Activated B cell treated with CpG ODN at 0.5 μM for 24 hours (primary cell): ENCODE measurements at regions of chr13 and their contacts with region 1.

Region 1: GRCh38 chr13:41352935-41353840 is 42.1 kb downstream of the NAA16 start:
- DNase-seq: no peak
- ATAC-seq: no peak
- H3K4me3 Mint-ChIP-seq: peak overlapping the region; percentile 15
- H3K27ac Mint-ChIP-seq: no peak overlapping the region
- H3K4me1 Mint-ChIP-seq: peaks cover 5% of the 10 kb centered on the region
- H3K27me3 Mint-ChIP-seq: no peaks in the 10 kb centered on the region
- CTCF ChIP-seq: no peak

Region 2: GRCh38 chr13:41075034-41075433 is 278.2 kb before region 1 on chr13:
- CTCF ChIA-PET with region 1: interaction called, 4 read pairs
- POLR2A ChIA-PET with region 1: no interaction called
- intact Hi-C with region 1: loop called (anchors 1 kb)
- DNase-seq: no peak
- ATAC-seq: peak; percentile 58
- H3K4me3 Mint-ChIP-seq: no peak overlapping the region
- H3K27ac Mint-ChIP-seq: no peak overlapping the region
- H3K4me1 Mint-ChIP-seq: no peaks in the 10 kb centered on the region
- H3K27me3 Mint-ChIP-seq: no peaks in the 10 kb centered on the region
- CTCF ChIP-seq: no peak

Region 3: GRCh38 chr13:41370736-41371135 is 17.5 kb after region 1 on chr13:
- CTCF ChIA-PET with region 1: no interaction called
- POLR2A ChIA-PET with region 1: no interaction called
- intact Hi-C with region 1: no loop called
- DNase-seq: no peak
- ATAC-seq: no peak
- H3K4me3 Mint-ChIP-seq: no peak overlapping the region
- H3K27ac Mint-ChIP-seq: no peak overlapping the region
- H3K4me1 Mint-ChIP-seq: no peaks in the 10 kb centered on the region
- H3K27me3 Mint-ChIP-seq: no peaks in the 10 kb centered on the region
- CTCF ChIP-seq: no peak

Region 4: GRCh38 chr13:41652727-41653361 is 299.7 kb after region 1 on chr13:
- CTCF ChIA-PET with region 1: interaction called, 9 read pairs
- POLR2A ChIA-PET with region 1: no interaction called
- intact Hi-C with region 1: loop called (anchors 1 kb)
- DNase-seq: no peak
- ATAC-seq: no peak
- H3K4me3 Mint-ChIP-seq: no peak overlapping the region
- H3K27ac Mint-ChIP-seq: no peak overlapping the region
- H3K4me1 Mint-ChIP-seq: peaks cover 9% of the 10 kb centered on the region
- H3K27me3 Mint-ChIP-seq: peaks cover 41% of the 10 kb centered on the region
- CTCF ChIP-seq: no peak

Region 5: DNA sequence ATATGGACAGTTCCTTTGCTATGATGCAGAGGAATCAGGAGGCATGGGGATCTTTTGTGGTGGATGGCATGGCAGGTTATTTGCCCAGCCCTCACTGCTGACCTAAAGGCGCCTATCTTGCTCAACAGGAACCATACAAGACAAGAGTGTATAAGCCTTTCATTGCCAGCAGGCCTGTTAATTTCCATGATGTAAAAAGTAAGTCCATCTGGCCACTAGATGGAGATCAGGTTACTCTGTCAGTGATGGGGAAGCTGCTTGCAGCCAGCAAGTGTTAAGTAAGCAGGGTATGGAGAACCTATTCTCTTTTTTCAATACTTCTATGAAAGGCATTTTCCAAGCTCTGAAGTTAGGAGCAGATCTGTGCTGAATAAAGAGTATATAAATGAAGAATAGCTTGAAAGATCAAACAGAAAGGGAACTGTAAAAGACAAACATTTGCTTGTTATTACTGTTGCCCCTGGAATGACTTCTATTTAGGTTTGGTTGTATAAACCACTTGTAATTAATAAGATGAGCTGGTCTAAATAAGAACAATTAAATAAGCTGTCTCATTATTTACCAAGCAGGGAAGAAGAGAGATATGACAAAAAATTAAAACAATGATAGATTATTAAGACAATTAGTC is 315.1 kb after region 1 on chr13:
- CTCF ChIA-PET with region 1: no interaction called
- POLR2A ChIA-PET with region 1: no interaction called
- intact Hi-C with region 1: loop called (anchors 5 kb)
- DNase-seq: no peak
- ATAC-seq: peak; percentile 68
- H3K4me3 Mint-ChIP-seq: no peak overlapping the region
- H3K27ac Mint-ChIP-seq: no peak overlapping the region
- H3K4me1 Mint-ChIP-seq: no peaks in the 10 kb centered on the region
- H3K27me3 Mint-ChIP-seq: peaks cover 17% of the 10 kb centered on the region
- CTCF ChIP-seq: no peak

Region 6: DNA sequence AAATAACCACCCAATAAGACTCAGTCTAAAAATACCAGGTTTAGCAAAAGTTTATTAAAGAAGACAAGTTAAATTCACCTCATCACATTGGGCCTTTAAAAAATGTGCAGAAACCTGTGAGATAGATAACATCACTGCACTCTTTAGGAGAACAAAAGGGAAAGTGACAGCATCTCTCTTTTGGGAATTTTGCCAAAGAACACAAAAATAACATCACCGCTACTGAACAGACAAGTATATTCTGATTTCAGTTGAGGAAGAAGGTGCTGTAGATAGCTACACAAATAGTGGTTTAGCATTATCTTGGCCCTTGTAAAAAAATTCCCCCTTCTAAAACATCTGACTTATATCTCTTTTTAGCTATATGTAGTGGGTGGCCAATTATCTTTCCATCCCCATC is 363.0 kb after region 1 on chr13:
- CTCF ChIA-PET with region 1: no interaction called
- POLR2A ChIA-PET with region 1: no interaction called
- intact Hi-C with region 1: loop called (anchors 2 kb)
- DNase-seq: no peak
- ATAC-seq: no peak
- H3K4me3 Mint-ChIP-seq: no peak overlapping the region
- H3K27ac Mint-ChIP-seq: no peak overlapping the region
- H3K4me1 Mint-ChIP-seq: no peaks in the 10 kb centered on the region
- H3K27me3 Mint-ChIP-seq: no peaks in the 10 kb centered on the region
- CTCF ChIP-seq: no peak

Region 7: GRCh38 chr13:41905600-41906254 is 552.5 kb after region 1 on chr13:
- CTCF ChIA-PET with region 1: no interaction called
- POLR2A ChIA-PET with region 1: no interaction called
- intact Hi-C with region 1: loop called (anchors 1 kb)
- DNase-seq: no peak
- ATAC-seq: peak; percentile 78
- H3K4me3 Mint-ChIP-seq: no peak overlapping the region
- H3K27ac Mint-ChIP-seq: no peak overlapping the region
- H3K4me1 Mint-ChIP-seq: no peaks in the 10 kb centered on the region
- H3K27me3 Mint-ChIP-seq: no peaks in the 10 kb centered on the region
- CTCF ChIP-seq: peak; percentile 30

Region 8: GRCh38 chr13:42022796-42023493 is 669.8 kb after region 1 on chr13:
- CTCF ChIA-PET with region 1: no interaction called
- POLR2A ChIA-PET with region 1: no interaction called
- intact Hi-C with region 1: no loop called
- DNase-seq: no peak
- ATAC-seq: no peak
- H3K4me3 Mint-ChIP-seq: no peak overlapping the region
- H3K27ac Mint-ChIP-seq: no peak overlapping the region
- H3K4me1 Mint-ChIP-seq: no peaks in the 10 kb centered on the region
- H3K27me3 Mint-ChIP-seq: peaks cover 2% of the 10 kb centered on the region
- CTCF ChIP-seq: no peak